ENCODE measurements at regions of chr20 and their contacts with region 1.

Region 1: DNA sequence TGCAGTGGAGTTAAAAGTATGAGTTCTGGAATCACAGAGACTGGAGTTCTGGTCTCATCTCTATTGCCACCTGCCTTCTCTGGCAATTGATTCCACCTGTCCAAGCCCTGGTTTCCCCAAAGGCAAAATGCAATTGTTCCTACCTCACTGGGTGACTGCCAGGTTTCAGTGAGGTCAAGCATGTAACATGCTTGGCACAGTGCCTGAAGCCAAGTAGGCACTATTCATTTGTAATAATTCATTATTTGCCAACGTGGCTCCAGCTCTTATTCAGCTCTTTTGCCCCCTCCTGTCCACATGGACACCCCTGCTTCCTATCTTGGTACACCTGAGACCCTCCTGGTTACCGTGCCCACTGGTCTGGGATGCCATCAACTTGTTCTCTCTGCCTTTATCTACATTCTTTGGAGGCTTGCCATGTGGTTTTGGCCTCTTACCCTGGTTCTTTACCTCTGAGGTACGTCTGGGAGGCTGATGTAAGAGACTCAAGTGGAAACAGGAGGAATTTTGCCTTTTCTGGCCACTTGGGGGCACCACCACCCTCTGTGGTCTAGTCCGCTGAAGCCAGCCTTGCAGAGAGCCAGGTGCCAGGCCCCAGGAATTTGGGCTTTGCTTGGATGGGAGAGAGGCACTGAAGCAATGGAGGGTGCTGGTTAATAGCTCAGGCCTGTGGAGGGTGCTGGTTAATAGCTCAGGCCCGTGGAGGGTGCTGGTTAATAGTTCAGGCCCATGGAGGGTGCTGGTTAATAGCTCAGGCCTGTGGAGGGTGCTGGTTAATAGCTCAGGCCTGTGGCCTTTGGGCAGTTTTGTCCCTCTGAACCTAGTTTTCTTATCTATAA is 1.7 kb downstream of the KCNK15 start:
- DNase-seq: peak; percentile 82
- ATAC-seq: peak; percentile 60 to 69

Region 2: DNA sequence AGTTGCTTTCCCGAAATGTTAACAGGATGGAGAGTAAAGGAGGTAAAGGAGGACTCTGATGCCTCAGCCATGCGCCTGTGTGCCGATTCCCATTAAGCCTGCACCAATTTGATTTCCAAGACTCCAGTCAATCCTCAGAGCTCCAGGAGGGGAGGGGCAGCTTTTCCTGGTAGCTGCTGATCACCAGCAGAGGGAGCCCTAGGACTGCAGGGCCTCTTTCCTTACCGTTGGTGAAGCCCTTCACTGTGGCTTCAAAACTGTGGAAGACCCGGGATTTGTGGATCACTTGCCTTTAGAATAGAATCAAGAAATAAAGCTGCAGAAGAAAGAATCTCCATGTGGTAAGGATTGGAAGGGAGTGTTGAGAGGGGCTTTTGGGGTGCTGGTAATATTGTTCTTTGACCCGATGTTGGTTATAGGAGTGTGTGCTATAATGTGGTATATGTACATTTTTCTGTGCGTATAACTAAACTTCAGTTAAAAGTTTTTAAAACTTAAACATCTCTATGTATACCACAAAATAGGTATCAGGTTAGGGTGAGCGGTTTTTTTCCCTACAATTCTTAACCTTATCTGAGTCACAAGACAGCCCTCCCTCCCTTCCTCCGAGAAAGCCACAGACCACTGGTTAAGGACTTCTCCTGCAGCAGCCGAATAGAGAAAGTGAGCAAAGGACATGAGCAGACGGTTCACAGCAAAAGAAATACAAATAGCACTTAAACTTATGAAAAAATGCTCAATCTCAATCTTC is 529.9 kb before region 1 on chr20:
- intact Hi-C with region 1: no loop called
- DNase-seq: peak; percentile 71
- ATAC-seq: peak; percentile 68 to 77

Region 3: GRCh38 chr20:44832724-44833123 is 85.3 kb after region 1 on chr20:
- intact Hi-C with region 1: no loop called
- DNase-seq: no peak
- ATAC-seq: peak; percentile 40 to 59

Region 4: DNA sequence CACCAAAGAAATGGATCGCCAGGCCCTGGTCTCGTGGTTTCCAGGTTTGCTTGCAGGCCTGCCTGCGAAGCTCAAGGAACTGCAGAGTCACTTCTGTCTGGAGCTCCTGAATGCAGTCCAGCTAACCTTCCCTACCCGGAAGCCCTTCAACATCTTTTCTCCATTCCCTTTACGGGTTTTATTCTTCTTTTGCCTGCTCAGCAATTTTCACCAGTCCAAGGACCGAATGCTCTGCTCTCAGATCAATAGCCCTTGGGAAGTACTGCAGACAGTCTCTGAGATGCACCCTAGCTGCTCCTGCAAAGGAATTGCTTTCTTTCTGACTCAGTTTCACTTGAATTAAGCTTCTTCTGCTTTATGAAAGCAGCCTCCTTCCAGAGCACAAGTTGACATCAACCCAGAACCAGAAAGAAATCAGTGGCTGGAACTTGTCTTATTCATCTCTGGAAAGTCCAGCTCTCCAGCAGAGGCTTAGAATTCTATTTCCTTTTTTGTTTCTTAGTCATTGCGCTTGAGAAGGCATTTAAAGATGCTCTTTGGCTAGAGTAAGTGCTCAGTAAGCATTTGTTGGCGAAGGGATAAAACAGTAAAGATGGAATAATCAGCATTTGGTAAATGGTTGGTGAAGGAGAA is 119.4 kb after region 1 on chr20:
- intact Hi-C with region 1: loop called (anchors 2 kb)
- DNase-seq: no peak
- ATAC-seq: no peak